Ovary (tissue), 10 donors: ENCODE measurements at regions of chr15 and their contacts with region 1.

Region 1: DNA sequence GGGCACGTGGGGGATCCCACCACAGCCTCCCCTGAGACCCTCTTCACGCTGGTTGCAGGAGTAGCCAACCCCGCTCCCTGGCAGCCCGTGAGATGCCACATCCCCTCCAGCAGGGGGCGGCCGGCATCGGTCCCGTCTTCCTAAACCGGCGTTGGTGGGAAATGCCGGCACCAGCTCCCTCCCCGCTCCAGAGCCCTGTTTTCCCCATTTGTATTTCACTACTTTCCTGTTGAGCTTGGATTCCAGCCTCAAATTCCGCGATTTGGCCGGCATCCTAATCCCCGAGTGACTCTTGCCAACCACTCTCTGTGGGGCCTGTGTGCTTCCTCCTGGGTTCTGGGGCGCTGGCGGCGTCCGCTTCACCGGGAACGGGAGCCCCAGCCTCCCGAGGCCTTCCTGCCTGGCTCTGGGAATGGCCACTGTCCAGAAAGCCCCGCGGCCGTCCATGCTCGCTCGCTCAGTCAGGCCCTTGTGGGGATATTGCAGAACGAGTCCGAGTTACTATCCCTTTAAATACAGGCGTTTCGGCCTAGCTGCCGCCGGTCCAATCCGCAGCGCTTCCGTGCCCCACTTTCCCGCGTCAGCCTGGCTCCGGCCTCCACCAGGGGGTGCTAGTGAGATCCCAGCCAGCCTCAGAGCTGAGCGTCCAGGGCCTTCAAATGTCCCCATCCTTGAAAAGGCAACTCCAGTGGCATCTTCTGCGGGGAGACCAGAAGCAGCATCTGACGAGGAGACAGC is 8.1 kb upstream of the ADAMTS17 start:
- DNase-seq: peak; percentile 93 to 97 (median 96)
- H3K4me3 ChIP-seq: peak overlapping the region; percentile 74
- H3K27ac ChIP-seq: peak overlapping the region; percentile 74 to 91
- H3K4me1 ChIP-seq: no peaks in the 10 kb centered on the region
- H3K27me3 ChIP-seq: no peaks in the 10 kb centered on the region
- CTCF ChIP-seq: peak; percentile 93 to 95 (median 94)
- EP300 ChIP-seq: no peak
- POLR2A ChIP-seq: peak; percentile 54

Region 2: DNA sequence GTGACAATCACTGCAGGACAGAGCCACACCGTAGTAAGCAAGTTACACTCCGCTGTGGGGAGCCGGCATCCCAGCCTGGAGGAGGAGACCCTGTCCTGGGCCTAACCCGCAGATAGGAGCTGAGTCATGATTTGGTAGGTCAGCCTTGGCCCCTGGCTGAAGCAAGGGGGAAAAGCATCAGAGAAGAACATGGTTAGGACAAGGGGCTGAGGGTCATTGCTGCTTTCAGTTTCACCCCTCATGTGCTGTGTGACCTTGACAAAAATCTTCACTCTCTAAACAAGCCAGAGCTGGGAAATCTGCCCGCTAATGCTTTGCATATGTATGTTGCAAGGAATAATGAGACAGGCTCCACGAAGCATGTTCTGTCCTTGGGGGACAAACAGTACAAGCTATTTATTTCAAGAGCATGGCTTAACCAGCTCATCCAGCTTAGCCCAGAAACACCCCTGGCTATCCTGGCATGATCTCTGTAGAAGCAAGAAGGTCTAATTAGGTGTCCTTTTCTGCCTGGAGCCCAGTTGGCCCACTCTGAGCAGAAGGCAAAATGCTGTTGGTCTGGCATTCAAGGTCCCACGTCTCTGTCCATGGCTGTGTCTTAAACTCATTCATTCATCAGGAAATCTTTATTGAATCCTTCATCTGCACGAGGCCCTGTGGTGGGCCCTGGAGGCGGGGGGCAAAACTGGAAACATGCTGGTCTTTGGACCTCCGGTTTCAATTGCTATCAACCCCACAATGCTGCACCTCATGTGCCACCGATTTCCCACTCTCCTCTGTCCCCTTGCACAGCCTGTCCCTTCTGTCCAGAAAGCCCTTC is 395.3 kb before region 1 on chr15:
- intact Hi-C with region 1: loop called in 1 of 4 experiments (anchors 10 kb)
- DNase-seq: peak; percentile 56 to 83 (median 78)
- H3K4me3 ChIP-seq: no peak overlapping the region
- H3K27ac ChIP-seq: peak overlapping the region in 1 of 2 donors; percentile 66
- H3K4me1 ChIP-seq: peaks cover 12% of the 10 kb centered on the region
- H3K27me3 ChIP-seq: no peaks in the 10 kb centered on the region
- CTCF ChIP-seq: no peak
- EP300 ChIP-seq: no peak
- POLR2A ChIP-seq: no peak

Region 3: GRCh38 chr15:100572362-100572983 is 222.6 kb after region 1 on chr15:
- intact Hi-C with region 1: loop called in 2 of 4 experiments (anchors 2 to 5 kb)
- DNase-seq: no peak
- H3K4me3 ChIP-seq: no peak overlapping the region
- H3K27ac ChIP-seq: no peak overlapping the region
- H3K4me1 ChIP-seq: no peaks in the 10 kb centered on the region
- H3K27me3 ChIP-seq: no peaks in the 10 kb centered on the region
- CTCF ChIP-seq: peak in 2 of 3 donors; percentile 25 to 33
- EP300 ChIP-seq: no peak
- POLR2A ChIP-seq: no peak

Region 4: GRCh38 chr15:100588638-100589242 is 238.9 kb after region 1 on chr15:
- intact Hi-C with region 1: loop called in 1 of 4 experiments (anchors 10 kb)
- DNase-seq: no peak
- H3K4me3 ChIP-seq: no peak overlapping the region
- H3K27ac ChIP-seq: no peak overlapping the region
- H3K4me1 ChIP-seq: peaks cover 1% of the 10 kb centered on the region
- H3K27me3 ChIP-seq: no peaks in the 10 kb centered on the region
- CTCF ChIP-seq: no peak
- EP300 ChIP-seq: no peak
- POLR2A ChIP-seq: no peak